ENCODE measurements at regions of chr16 and their contacts with region 1.

Region 1: DNA sequence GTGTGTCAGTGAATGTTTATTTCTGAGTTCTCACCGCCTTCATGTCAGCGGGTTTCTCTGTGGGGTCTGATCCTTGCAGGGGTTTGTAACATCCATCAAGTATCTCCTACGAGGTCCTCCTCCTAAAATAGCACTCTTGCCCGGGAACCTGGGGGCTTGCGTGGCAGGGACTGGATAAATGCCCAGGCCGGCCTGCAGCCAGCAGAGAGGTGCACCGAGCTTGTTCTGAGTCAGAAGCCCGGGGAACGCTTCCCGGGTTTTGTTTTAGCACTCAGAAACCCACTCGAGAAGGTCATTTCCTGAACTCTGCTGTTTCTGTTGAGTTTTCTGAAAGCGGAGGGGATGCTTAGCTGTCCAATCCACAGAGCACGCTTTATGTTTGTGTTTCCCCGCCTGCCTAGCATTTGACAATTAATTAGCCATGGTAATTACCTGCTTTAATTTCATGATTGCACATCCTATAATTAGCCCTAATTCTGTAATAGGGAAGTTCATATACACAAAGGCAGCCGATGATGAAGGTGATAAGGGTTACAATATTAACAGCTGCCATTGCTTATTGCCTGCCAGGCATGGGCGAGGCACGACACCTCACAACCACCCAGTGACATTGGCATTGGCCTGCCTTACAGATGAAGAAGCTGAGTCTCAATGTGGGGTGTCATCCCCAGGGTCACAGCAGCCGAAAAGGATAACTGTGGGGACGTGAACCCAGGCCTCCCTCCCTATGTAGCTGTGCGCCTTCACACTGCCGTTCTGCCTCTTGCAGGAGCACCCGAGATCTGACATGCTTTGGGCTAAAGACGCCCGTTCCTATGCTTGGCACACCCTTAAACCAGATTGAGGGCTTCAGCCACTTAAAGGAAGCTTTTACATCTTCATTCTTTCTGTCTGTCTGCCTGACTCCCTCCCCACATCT is 333.1 kb downstream of the CPPED1 start:
- DNase-seq: peak in 1 of 2 donors; percentile 68
- H3K4me3 ChIP-seq: no peak overlapping the region
- H3K27ac ChIP-seq: no peak overlapping the region
- H3K4me1 ChIP-seq: peaks cover 0 to 14% of the 10 kb centered on the region in 2 donors
- H3K27me3 ChIP-seq: no peaks in the 10 kb centered on the region
- CTCF ChIP-seq: no peak

Region 2: GRCh38 chr16:12449795-12450194 is 20.8 kb before region 1 on chr16:
- intact Hi-C with region 1: loop called (anchors 2 kb)
- DNase-seq: no peak
- H3K4me3 ChIP-seq: no peak overlapping the region
- H3K27ac ChIP-seq: no peak overlapping the region
- H3K4me1 ChIP-seq: no peaks in the 10 kb centered on the region
- H3K27me3 ChIP-seq: no peaks in the 10 kb centered on the region
- CTCF ChIP-seq: no peak

Measured in ascending aorta (tissue), 2 donors.